Heart left ventricle (tissue), 16 donors: ENCODE measurements at regions of chr18 and their contacts with region 1.

Region 1: GRCh38 chr18:36169938-36170337 is 17.4 kb upstream of the MOCOS start:
- DNase-seq: no peak
- ATAC-seq: no peak
- H3K4me3 ChIP-seq: no peak overlapping the region
- H3K27ac ChIP-seq: no peak overlapping the region
- H3K4me1 ChIP-seq: no peaks in the 10 kb centered on the region
- H3K27me3 ChIP-seq: no peaks in the 10 kb centered on the region
- CTCF ChIP-seq: no peak
- POLR2A ChIP-seq: no peak

Region 2: GRCh38 chr18:35029770-35030169 is 1140.2 kb before region 1 on chr18:
- intact Hi-C with region 1: no loop called
- DNase-seq: no peak
- ATAC-seq: peak in 1 of 4 donors; percentile 56
- H3K4me3 ChIP-seq: peak overlapping the region in 10 of 12 donors; percentile 11 to 50 (median 34)
- H3K27ac ChIP-seq: peak overlapping the region in 10 of 12 donors; percentile 19 to 86 (median 32)
- H3K4me1 ChIP-seq: peaks cover 0 to 38% (median 30%) of the 10 kb centered on the region in 12 donors
- H3K27me3 ChIP-seq: no peaks in the 10 kb centered on the region
- CTCF ChIP-seq: peak in 2 of 12 donors; percentile 7 to 10
- POLR2A ChIP-seq: no peak

Region 3: DNA sequence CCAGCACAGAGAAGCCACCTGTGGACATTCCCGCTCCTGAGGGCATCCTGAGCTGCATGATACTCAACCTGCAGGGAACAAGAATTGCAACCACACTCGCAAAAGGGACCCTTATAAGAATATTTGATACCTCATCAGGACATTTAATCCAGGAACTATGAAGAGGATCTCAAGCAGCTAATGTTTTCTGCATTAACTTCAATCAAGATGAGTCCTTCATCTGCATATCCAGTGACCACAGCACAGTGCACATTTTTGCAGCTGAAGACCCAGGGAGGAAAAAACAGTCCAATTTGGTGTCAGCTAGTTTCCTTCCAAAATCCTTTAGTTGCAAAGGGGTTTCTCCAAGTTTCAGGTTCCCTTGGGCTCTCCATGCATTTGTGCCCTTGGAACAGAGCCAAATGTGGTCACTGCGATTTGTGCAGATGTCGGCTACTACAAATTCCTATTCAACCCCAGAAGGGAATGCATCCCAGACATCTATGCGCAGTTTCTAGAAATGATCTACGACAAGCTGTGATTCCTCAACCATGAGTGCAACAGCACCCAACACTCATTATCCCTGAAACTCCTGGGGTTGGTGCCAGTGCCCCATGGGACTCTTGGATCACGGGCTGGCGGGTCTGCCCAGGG is 104.3 kb after region 1 on chr18:
- intact Hi-C with region 1: loop called in 1 of 10 experiments (anchors 5 kb)
- DNase-seq: no peak
- ATAC-seq: no peak
- H3K4me3 ChIP-seq: no peak overlapping the region
- H3K27ac ChIP-seq: no peak overlapping the region
- H3K4me1 ChIP-seq: no peaks in the 10 kb centered on the region
- H3K27me3 ChIP-seq: peaks cover 0 to 8% (median 0%) of the 10 kb centered on the region in 9 donors
- CTCF ChIP-seq: no peak
- POLR2A ChIP-seq: no peak

Region 4: DNA sequence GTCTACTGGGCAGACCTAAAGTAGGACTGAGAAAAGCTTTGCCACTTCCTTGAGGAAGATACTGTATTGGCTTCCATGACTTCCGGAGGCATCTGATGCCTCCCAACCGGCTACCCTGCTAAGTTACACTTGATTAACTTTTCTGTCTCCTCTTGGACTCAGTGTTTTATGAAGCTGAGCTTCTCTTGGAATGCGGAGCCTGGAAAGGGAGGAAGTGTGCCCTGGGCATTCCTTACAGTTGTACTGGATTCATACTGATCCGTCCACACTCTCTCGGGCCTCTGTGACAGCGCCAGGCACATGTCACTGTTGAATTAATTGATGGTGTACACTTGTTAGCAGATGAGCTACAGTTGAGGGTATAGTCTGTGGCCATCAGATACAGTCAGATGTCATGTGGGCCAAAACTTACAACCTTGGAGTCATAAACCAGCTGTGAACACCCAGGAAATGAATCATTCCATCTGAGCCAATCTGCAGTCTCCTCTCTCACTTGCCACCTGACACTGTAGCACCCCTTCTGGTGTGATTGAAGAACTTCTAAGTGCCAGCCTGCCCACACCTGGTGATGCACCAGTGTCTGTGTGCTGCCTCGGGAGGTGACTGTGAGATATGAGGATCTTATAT is 250.1 kb after region 1 on chr18:
- intact Hi-C with region 1: no loop called
- DNase-seq: no peak
- ATAC-seq: peak in 3 of 4 donors; percentile 15 to 31 (median 27)
- H3K4me3 ChIP-seq: no peak overlapping the region
- H3K27ac ChIP-seq: peak overlapping the region; percentile 10 to 89 (median 76)
- H3K4me1 ChIP-seq: peaks cover 0 to 81% (median 32%) of the 10 kb centered on the region in 12 donors
- H3K27me3 ChIP-seq: no peaks in the 10 kb centered on the region
- CTCF ChIP-seq: peak in 3 of 12 donors; percentile 4 to 16 (median 7)
- POLR2A ChIP-seq: no peak